Posterior cingulate gyrus (tissue), 11 donors: ENCODE measurements at regions of chr4 and their contacts with region 1.

Region 1: GRCh38 chr4:52038103-52038912 is at the start of gene SGCB:
- DNase-seq: peak; percentile 71 to 98 (median 84)

Region 2: DNA sequence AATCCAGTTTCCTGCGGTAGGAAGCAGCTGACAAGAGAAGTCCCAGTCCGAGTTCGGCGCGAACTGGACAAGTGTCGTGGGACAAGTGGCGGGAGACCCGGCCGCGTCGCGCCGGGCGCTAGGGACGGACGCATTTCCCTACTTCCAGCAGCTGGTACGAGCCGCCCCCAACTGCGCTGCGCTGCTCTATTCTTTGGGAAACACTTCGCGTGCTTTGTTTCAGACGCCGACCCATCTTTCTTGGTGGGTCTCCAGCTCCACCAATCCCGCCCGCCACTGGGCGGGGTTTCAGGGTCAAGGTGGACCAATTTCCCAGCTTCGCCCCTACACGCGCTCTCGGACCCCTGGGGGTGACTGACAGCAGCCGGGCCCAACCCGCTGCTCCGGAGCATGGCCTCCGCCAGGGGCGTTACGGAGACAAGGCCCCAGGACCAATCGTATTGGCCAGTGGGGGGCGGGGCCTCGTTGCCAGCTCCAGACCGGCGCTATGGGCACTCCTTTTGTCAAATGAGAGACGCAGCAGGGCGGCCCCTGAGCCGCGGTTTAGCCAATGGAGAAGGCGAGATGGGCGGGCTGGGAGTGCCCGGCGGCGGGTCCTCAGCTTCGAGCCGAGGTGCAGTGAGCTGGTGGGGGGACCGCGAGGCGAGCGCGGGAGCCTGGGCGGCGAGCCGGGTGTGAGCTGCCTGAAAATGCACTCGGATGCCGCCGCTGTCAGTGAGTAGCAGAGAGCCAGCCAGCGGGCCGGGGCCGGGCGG is 195.6 kb before region 1 on chr4 and contains the start of gene DCUN1D4:
- intact Hi-C with region 1: loop called (anchors 5 kb)
- DNase-seq: peak; percentile 100